ENCODE measurements at regions of chr20 and their contacts with region 1.

Region 1: DNA sequence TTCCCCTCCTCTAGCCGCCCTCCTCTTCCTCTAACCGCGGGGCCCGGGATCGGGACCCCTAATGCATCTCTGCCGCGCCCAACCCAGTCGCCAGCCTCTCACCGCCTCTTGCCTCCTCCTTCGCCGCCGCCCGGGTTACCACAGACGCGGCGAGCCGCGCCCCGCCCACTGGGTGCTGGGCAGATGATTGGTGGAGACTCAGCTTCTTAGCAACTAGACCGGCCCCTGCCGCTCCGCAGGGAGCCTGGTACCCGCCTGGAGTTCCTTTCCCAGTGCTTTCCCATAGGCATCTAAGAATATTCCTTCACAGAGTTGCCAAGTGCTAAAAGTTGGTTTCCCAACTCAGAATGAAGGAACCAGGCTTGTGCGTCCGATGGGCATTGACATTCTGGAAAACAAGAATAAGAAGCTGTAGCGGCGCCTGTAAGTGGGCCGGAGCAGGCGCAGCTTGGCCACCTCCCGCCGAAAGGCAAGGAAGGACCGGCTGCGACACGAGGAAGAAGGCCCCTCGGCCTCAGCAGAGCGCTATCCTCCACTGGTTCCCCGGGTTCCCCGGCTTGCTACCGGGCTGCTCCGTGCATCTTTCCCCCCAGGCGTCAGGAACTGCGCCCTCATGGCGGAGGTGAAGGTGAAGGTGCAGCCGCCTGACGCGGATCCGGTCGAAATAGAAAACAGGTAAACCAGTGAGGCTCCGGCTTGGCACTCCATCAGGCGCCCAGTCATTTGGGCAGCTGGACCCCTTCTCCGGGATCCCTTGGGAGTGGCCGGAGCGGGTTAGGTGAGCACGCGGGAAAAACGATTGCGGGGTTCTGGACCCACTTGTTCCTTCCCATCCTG is at the starts of genes DZANK1 and POLR3F:
- DNase-seq: peak; percentile 97
- ATAC-seq: peak; percentile 99
- H3K4me3 ChIP-seq: peak within 1 kb of the TSS; percentile 79 to 91 (median 83)
- H3K27ac ChIP-seq: peak within 1 kb of the TSS; percentile 88
- H3K4me1 ChIP-seq: peaks cover 27% of the 10 kb centered on the region
- H3K27me3 ChIP-seq: no peaks in the 10 kb centered on the region; a peak in 1 of 5 replicates
- CTCF ChIP-seq: peak; percentile 27
- EP300 ChIP-seq: 0 out of 4 replicates have a peak, but pooled peaks of 1 of the 2 experiments have one; percentile 21
- POLR2A ChIP-seq: peak; percentile 83 to 96
- RAD21 ChIP-seq: peak; percentile 53; the same call in 1 of the 2 replicates
- total RNA-seq, gene DZANK1: 1.4 and 1.6 TPM in 2 replicates
- total RNA-seq, gene POLR3F: 25.5 and 31.2 TPM in 2 replicates

Region 2: GRCh38 chr20:18388860-18389259 is 78.3 kb before region 1 on chr20:
- CTCF ChIA-PET with region 1: no interaction called
- POLR2A ChIA-PET with region 1: interaction called, 16 read pairs
- in situ Hi-C with region 1: no loop called
- intact Hi-C with region 1: no loop called
- DNase-seq: peak; percentile 95
- ATAC-seq: peak; percentile 89
- H3K4me3 ChIP-seq: no peak overlapping the region
- H3K27ac ChIP-seq: peak overlapping the region; percentile 9
- H3K4me1 ChIP-seq: peaks cover 30% of the 10 kb centered on the region
- H3K27me3 ChIP-seq: no peaks in the 10 kb centered on the region
- CTCF ChIP-seq: no peak
- EP300 ChIP-seq: peak in 1 of 2 experiments; percentile 72; a peak in 1 of 4 replicates
- POLR2A ChIP-seq: no peak
- RAD21 ChIP-seq: no peak

Region 3: DNA sequence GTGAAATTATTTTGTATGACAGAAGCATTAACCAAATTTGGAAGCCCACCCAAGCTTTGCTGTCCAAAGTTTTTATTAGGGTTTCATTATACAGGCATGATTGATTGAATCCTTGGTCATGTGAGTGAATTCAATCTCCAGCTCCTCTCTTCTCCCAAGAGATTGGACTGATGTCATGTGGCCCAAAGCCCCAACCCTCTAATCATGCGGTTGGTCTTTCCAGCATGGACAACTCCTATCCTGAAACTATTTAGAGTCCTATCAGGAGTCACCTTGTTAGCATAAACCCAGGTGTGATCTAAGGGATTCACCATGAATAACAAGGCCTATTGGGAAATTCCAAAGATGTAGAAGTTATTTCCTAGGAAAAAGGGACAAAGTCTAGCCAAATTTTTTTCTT is 10.7 kb after region 1 on chr20:
- CTCF ChIA-PET with region 1: no interaction called
- POLR2A ChIA-PET with region 1: interaction called, 14 read pairs
- in situ Hi-C with region 1: no loop called
- intact Hi-C with region 1: no loop called
- DNase-seq: no peak
- ATAC-seq: no peak
- H3K4me3 ChIP-seq: no peak overlapping the region
- H3K27ac ChIP-seq: no peak overlapping the region
- H3K4me1 ChIP-seq: peaks cover 21% of the 10 kb centered on the region
- H3K27me3 ChIP-seq: no peaks in the 10 kb centered on the region
- CTCF ChIP-seq: no peak
- EP300 ChIP-seq: no peak
- POLR2A ChIP-seq: no peak
- RAD21 ChIP-seq: no peak

Region 4: GRCh38 chr20:18507218-18508021 is 40.3 kb after region 1 on chr20 and contains the start of gene SEC23B:
- CTCF ChIA-PET with region 1: no interaction called
- POLR2A ChIA-PET with region 1: interaction called, 78 read pairs
- in situ Hi-C with region 1: no loop called
- intact Hi-C with region 1: loop called (anchors 1 kb)
- DNase-seq: peak; percentile 99
- ATAC-seq: peak; percentile 98
- H3K4me3 ChIP-seq: peak within 1 kb of the TSS; percentile 76 to 88 (median 87)
- H3K27ac ChIP-seq: peak within 1 kb of the TSS; percentile 95
- H3K4me1 ChIP-seq: peaks cover 44% of the 10 kb centered on the region
- H3K27me3 ChIP-seq: no peaks in the 10 kb centered on the region; a peak in 1 of 5 replicates
- CTCF ChIP-seq: no peak
- EP300 ChIP-seq: no peak; a peak in 1 of 4 replicates
- POLR2A ChIP-seq: peak; percentile 90 to 95
- RAD21 ChIP-seq: 0 out of 2 replicates have a peak, but pooled peaks have one; percentile 12
- total RNA-seq, gene SEC23B: 120 and 178 TPM in 2 replicates

Region 5: GRCh38 chr20:18587665-18588573 is 120.8 kb after region 1 on chr20 and contains the start of gene DTD1:
- CTCF ChIA-PET with region 1: no interaction called
- POLR2A ChIA-PET with region 1: interaction called, 10 read pairs
- in situ Hi-C with region 1: no loop called
- intact Hi-C with region 1: loop called (anchors 5 kb)
- DNase-seq: peak; percentile 84
- ATAC-seq: peak; percentile 90
- H3K4me3 ChIP-seq: peak within 1 kb of the TSS; percentile 67 to 80 (median 80)
- H3K27ac ChIP-seq: peak within 1 kb of the TSS; percentile 36
- H3K4me1 ChIP-seq: peaks cover 50% of the 10 kb centered on the region
- H3K27me3 ChIP-seq: no peaks in the 10 kb centered on the region
- CTCF ChIP-seq: peak; percentile 88
- EP300 ChIP-seq: no peak
- POLR2A ChIP-seq: peak; percentile 62 to 76
- RAD21 ChIP-seq: peak; percentile 88
- total RNA-seq, gene DTD1: 79.3 and 85.5 TPM in 2 replicates

Measured in HepG2 (cell line).